HEK293 (cell line): ENCODE measurements at regions of chr2 and their contacts with region 1.

Region 1: GRCh38 chr2:168118733-168119514 is 128.5 kb downstream of the STK39 start:
- H3K4me3 ChIP-seq: no peak overlapping the region
- H3K27ac ChIP-seq: no peak overlapping the region
- H3K4me1 ChIP-seq: no peaks in the 10 kb centered on the region
- CTCF ChIP-seq: peak; percentile 51; the same call in 1 of the 2 replicates

Region 2: GRCh38 chr2:167264380-167264779 is 854.5 kb before region 1 on chr2:
- CTCF ChIA-PET with region 1: interaction called, 18 read pairs
- POLR2A ChIA-PET with region 1: no interaction called
- H3K4me3 ChIP-seq: no peak overlapping the region
- H3K27ac ChIP-seq: no peak overlapping the region
- H3K4me1 ChIP-seq: no peaks in the 10 kb centered on the region
- CTCF ChIP-seq: no peak

Region 3: GRCh38 chr2:167550448-167550847 is 568.5 kb before region 1 on chr2:
- CTCF ChIA-PET with region 1: interaction called, 13 read pairs
- POLR2A ChIA-PET with region 1: no interaction called
- H3K4me3 ChIP-seq: no peak overlapping the region
- H3K27ac ChIP-seq: no peak overlapping the region
- H3K4me1 ChIP-seq: no peaks in the 10 kb centered on the region
- CTCF ChIP-seq: no peak

Region 4: DNA sequence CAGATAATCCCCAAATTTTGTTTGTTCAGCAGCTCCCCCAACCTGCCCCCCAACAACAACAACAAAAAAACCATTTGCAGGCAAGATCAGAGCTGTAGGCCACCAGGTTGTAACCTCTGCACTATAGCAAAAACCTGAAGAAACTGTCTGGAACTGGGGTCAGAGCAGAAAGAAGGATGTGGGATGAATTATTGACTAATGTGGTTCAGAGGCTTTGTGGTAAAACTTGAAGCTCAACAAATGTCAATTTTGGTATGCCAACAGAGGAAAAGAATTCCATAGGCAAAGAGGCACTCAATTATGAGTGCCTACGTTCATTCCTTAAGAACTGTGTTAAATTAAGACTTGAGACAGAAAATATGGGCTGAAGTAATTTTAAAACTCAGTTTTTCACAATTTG is 126.6 kb before region 1 on chr2:
- CTCF ChIA-PET with region 1: no interaction called
- POLR2A ChIA-PET with region 1: no interaction called
- H3K4me3 ChIP-seq: no peak overlapping the region
- H3K27ac ChIP-seq: no peak overlapping the region
- H3K4me1 ChIP-seq: no peaks in the 10 kb centered on the region
- CTCF ChIP-seq: no peak

Region 5: GRCh38 chr2:168097431-168097830 is 21.5 kb before region 1 on chr2:
- CTCF ChIA-PET with region 1: interaction called, 18 read pairs
- POLR2A ChIA-PET with region 1: no interaction called
- H3K4me3 ChIP-seq: no peak overlapping the region
- H3K27ac ChIP-seq: no peak overlapping the region
- H3K4me1 ChIP-seq: no peaks in the 10 kb centered on the region
- CTCF ChIP-seq: no peak

Region 6: GRCh38 chr2:168130346-168130745 is 11.4 kb after region 1 on chr2:
- CTCF ChIA-PET with region 1: interaction called, 18 read pairs
- POLR2A ChIA-PET with region 1: no interaction called
- H3K4me3 ChIP-seq: no peak overlapping the region
- H3K27ac ChIP-seq: no peak overlapping the region
- H3K4me1 ChIP-seq: no peaks in the 10 kb centered on the region
- CTCF ChIP-seq: no peak

Region 7: GRCh38 chr2:168174756-168175155 is 55.8 kb after region 1 on chr2:
- CTCF ChIA-PET with region 1: no interaction called
- POLR2A ChIA-PET with region 1: no interaction called
- H3K4me3 ChIP-seq: no peak overlapping the region
- H3K27ac ChIP-seq: no peak overlapping the region
- H3K4me1 ChIP-seq: no peaks in the 10 kb centered on the region
- CTCF ChIP-seq: no peak